ENCODE measurements at regions of chr15 and their contacts with region 1.

Region 1: GRCh38 chr15:75453703-75454470 is 2.4 kb upstream of the SIN3A start:
- DNase-seq: peak; percentile 98
- H3K4me3 ChIP-seq: peak overlapping the region; percentile 63 to 86 (median 80)
- H3K27ac ChIP-seq: peak overlapping the region; percentile 98 to 99 (median 98)
- H3K4me1 ChIP-seq: peaks cover 9 to 28% (median 24%) of the 10 kb centered on the region in 4 donors
- H3K27me3 ChIP-seq: no peaks in the 10 kb centered on the region
- CTCF ChIP-seq: no peak
- EP300 ChIP-seq: no peak
- POLR2A ChIP-seq: peak; percentile 94

Region 2: DNA sequence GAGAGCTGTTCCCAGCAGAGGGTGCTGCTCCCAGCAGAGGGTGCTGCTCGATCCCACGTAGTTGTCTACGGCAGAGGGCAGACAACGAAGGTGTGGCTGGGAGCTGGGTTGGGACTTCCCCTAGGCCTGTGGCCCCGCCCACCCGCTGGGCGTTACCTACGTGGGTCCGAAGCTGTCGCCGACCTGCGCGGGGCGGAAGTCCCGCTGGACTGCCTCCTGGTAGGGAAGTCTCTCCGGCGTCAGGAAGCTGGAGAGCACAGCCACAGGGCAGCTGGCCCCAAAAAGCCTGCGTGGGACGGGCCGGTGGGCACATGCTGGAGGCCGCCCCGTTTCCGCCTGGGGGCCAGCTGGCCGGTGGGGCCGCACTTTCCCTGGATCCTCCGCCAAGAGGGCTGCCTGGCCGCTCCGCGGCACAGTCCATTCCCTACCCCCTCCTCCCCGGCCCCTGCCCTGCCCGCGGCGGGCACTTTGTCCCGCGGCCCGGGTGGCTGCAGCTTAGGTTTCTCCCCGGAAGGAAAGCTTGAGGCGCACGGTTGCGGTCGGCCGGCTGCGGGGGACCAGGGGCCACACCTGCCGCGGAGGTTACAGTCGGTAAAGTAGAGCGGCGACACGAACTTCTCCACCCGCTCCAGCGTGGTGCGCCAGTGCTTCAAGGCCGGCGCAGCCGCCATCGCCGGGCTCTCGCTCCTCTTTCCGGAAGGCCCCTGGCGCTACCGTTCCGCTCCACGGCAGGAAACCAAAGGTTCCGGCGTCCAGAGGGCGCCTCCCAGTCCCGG is 85.8 kb before region 1 on chr15 and contains the start of gene MAN2C1:
- in situ Hi-C with region 1: loop called in 1 of 4 experiments (anchors 10 kb)
- intact Hi-C with region 1: no loop called
- DNase-seq: peak; percentile 99
- H3K4me3 ChIP-seq: peak within 1 kb of the TSS; percentile 43 to 86 (median 83)
- H3K27ac ChIP-seq: peak within 1 kb of the TSS; percentile 94 to 99 (median 99)
- H3K4me1 ChIP-seq: peaks cover 8 to 22% (median 18%) of the 10 kb centered on the region in 4 donors
- H3K27me3 ChIP-seq: no peaks in the 10 kb centered on the region
- CTCF ChIP-seq: peak in 4 of 5 experiments; percentile 61 to 90 (median 76)
- EP300 ChIP-seq: no peak
- POLR2A ChIP-seq: peak; percentile 98
- total RNA-seq, gene MAN2C1: 215 to 559 (median 411) TPM

Region 3: DNA sequence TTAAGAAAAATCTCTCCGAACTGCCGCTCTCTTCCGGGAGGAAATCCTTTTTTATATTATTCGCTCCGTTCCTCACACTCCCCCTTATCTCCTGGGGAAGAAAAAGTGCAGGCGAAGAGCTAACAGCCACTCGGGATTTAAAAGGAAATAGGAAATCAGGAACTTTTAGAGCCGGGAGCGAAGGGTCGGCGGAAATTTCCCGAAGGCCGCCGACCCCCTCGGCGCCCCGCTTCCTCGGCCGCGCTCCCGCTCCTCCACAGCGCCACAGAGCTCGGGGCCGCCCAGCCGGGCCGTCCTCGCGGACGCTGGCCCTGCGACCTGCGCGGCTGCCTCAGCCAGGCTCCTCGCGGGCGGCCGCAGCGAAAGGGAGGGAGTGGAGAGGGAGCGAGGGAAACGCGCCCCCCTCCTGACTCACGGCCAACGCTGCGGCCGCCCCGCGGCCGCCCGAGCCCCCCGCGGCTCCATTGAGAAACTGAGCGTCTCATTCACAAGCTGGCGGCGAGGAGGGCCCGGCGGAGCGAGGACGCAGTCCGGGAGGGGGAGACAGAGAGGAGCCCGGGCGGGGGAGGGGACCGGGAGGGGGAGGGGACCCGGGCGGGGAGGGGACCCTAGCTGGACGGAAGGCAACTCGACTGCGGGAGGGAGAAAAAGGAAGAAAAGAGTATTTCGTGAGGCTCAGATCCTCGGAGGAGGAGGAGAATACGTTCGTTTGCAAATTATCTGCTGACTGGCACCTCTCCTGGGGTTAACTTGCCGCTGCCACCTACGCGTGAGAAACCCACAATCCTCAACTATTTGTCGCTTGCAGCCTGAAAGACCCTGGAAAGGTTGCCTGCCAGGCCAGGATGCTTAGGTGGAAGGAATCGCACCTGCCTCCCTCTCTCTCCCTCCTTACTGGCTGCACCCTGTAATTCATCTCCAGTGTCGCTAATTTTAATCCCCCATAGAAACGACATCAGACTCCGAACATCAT is 125.3 kb after region 1 on chr15 and contains the start of gene PTPN9:
- in situ Hi-C with region 1: no loop called
- intact Hi-C with region 1: loop called (anchors 5 kb)
- DNase-seq: peak; percentile 85
- H3K4me3 ChIP-seq: peak within 1 kb of the TSS; percentile 64 to 98 (median 86)
- H3K27ac ChIP-seq: peak within 1 kb of the TSS; percentile 88 to 96 (median 94)
- H3K4me1 ChIP-seq: peaks cover 0 to 24% (median 15%) of the 10 kb centered on the region in 4 donors
- H3K27me3 ChIP-seq: no peaks in the 10 kb centered on the region
- CTCF ChIP-seq: peak in 4 of 5 experiments; percentile 45 to 65 (median 56)
- EP300 ChIP-seq: no peak
- POLR2A ChIP-seq: peak; percentile 50
- total RNA-seq, gene PTPN9: 16.5 to 36.3 (median 29.6) TPM

Region 4: DNA sequence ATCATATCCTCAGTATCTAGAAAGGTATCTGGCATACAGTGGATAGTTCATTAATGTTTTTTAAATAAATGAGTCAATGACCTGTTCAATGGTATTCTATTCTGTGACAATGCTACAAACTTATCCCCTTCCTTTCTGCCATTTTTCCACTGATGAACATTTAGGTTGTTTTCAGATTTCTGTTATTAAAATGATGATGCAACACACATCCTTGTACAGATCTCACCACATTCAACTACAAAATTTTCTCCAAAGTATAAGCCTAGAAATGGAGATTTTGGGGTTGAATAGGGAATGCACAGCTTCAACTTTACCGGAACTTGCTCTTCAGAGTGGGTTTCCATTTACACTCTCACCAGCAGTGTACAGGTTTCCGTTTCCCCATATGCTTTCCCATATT is 1092.9 kb after region 1 on chr15:
- in situ Hi-C with region 1: no loop called
- intact Hi-C with region 1: no loop called
- DNase-seq: no peak
- H3K4me3 ChIP-seq: no peak overlapping the region
- H3K27ac ChIP-seq: no peak overlapping the region
- H3K4me1 ChIP-seq: no peaks in the 10 kb centered on the region
- H3K27me3 ChIP-seq: no peaks in the 10 kb centered on the region
- CTCF ChIP-seq: no peak
- EP300 ChIP-seq: no peak
- POLR2A ChIP-seq: no peak

Measured in transverse colon (tissue), 4 donors.